ENCODE measurements at regions of chr9 and their contacts with region 1.

Region 1: GRCh38 chr9:81529556-81530195 is 159.7 kb downstream of the TLE1 start:
- DNase-seq: no peak
- H3K4me3 ChIP-seq: no peak overlapping the region
- H3K27ac ChIP-seq: no peak overlapping the region
- H3K4me1 ChIP-seq: peaks cover 0 to 6% (median 4%) of the 10 kb centered on the region in 4 donors
- H3K27me3 ChIP-seq: no peaks in the 10 kb centered on the region
- CTCF ChIP-seq: no peak
- EP300 ChIP-seq: no peak
- POLR2A ChIP-seq: no peak

Region 2: GRCh38 chr9:81456431-81457006 is 73.2 kb before region 1 on chr9:
- intact Hi-C with region 1: no loop called
- DNase-seq: no peak
- H3K4me3 ChIP-seq: no peak overlapping the region
- H3K27ac ChIP-seq: no peak overlapping the region
- H3K4me1 ChIP-seq: peaks cover 0 to 10% (median 6%) of the 10 kb centered on the region in 4 donors
- H3K27me3 ChIP-seq: no peaks in the 10 kb centered on the region
- CTCF ChIP-seq: no peak
- EP300 ChIP-seq: no peak
- POLR2A ChIP-seq: no peak

Region 3: GRCh38 chr9:81689343-81690190 is 159.9 kb after region 1 on chr9 and contains the start of gene TLE1:
- intact Hi-C with region 1: loop called (anchors 2 kb)
- DNase-seq: peak; percentile 100
- H3K4me3 ChIP-seq: peak within 1 kb of the TSS; percentile 73 to 92 (median 91)
- H3K27ac ChIP-seq: peak within 1 kb of the TSS; percentile 92 to 97 (median 96)
- H3K4me1 ChIP-seq: peaks cover 15 to 40% (median 32%) of the 10 kb centered on the region in 4 donors
- H3K27me3 ChIP-seq: no peaks in the 10 kb centered on the region
- CTCF ChIP-seq: no peak
- EP300 ChIP-seq: peak; percentile 33
- POLR2A ChIP-seq: peak; percentile 85
- total RNA-seq, gene TLE1: 52.3 to 125 (median 76.8) TPM

Region 4: GRCh38 chr9:81855538-81855937 is 325.9 kb after region 1 on chr9:
- intact Hi-C with region 1: loop called (anchors 10 kb)
- DNase-seq: no peak
- H3K4me3 ChIP-seq: no peak overlapping the region
- H3K27ac ChIP-seq: no peak overlapping the region
- H3K4me1 ChIP-seq: peaks cover 8 to 11% (median 10%) of the 10 kb centered on the region in 4 donors
- H3K27me3 ChIP-seq: no peaks in the 10 kb centered on the region
- CTCF ChIP-seq: no peak
- EP300 ChIP-seq: no peak
- POLR2A ChIP-seq: no peak